ENCODE measurements at regions of chr4 and their contacts with region 1.

Region 1: GRCh38 chr4:94577136-94577535 is 125.4 kb downstream of the PDLIM5 start:
- DNase-seq: peak; percentile 34 to 90 (median 58)

Region 2: DNA sequence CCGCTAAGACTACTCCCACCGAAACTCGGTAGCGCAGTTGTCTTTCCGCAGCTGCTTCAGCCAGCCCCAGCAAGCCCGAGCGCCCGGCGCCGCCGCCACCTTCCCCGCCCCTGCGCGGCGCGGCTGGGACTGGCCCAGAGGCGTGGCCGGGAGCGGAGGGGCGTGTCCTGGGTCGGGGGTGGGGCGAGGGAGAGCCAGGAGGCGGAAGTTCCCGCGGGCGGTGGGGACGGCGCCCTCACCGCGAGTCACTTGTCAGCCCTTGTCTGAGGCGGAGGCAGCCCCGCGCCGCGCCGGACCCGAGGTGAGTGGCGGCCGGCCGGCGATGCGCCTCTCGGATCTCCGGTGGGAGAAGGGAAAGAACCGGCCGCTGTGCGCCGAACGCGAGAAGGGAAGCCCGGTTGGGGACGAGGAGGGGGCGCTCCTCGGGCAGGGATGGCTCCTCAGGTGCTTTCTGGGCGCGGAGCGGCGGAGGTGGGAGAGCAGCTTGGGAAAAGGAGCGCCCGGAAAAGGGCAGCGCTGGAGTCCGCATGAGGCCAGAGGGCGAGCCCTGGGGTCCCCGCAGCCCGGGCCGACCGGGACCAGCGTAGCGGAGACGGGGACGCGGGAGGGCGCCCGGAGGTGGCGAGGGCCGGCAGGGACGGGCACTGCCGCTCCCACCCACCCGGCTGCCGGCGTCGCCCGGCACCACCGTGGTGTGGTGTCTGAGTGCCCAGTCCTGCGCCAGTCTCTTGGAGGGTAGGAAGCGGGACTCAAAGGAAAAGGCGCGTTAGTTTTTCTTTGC is 125.3 kb before region 1 on chr4 and contains the start of gene PDLIM5:
- intact Hi-C with region 1: loop called (anchors 5 kb)
- DNase-seq: peak; percentile 77 to 98 (median 86)

Region 3: GRCh38 chr4:94690851-94691254 is 113.7 kb after region 1 on chr4:
- intact Hi-C with region 1: no loop called
- DNase-seq: no peak

Region 4: DNA sequence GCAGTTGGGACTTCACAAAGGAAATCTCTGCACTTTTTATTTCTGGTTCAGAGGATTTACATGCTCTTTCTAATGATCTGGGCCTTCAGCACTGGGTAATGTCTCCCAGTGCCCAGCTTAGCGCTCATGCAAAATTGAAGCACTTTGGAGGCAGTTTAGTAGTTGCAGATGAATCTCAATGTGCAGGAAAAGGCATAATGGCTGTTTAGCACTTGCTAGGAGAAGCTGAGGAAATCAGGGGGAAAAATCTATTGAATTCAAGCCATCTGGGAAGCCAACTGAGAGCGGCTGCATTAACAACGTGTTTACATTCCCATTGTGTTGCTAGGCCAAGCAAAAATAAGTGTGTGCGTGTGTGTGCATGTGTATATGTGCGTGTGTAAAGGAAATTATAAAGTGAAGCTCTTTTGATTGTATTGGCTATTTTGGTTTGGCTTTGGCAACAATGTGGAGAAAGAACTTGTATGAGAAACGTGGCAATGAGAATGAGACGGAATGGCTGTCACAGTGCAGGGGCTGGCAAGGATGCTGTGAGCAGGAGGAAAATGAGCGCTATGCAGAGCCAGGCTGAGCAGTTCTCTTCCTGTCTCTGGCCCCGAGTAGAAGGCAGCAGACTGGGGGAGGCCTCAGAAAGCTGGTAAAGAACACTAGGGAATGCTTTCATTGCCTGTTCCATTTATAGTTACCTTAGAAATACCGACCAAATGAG is 740.1 kb after region 1 on chr4:
- intact Hi-C with region 1: no loop called
- DNase-seq: peak in 5 of 10 donors; percentile 30 to 83 (median 48)

Measured in posterior cingulate gyrus (tissue), 11 donors.